Aorta (tissue), 5 donors: ENCODE measurements at regions of chr1 and their contacts with region 1.

Region 1: DNA sequence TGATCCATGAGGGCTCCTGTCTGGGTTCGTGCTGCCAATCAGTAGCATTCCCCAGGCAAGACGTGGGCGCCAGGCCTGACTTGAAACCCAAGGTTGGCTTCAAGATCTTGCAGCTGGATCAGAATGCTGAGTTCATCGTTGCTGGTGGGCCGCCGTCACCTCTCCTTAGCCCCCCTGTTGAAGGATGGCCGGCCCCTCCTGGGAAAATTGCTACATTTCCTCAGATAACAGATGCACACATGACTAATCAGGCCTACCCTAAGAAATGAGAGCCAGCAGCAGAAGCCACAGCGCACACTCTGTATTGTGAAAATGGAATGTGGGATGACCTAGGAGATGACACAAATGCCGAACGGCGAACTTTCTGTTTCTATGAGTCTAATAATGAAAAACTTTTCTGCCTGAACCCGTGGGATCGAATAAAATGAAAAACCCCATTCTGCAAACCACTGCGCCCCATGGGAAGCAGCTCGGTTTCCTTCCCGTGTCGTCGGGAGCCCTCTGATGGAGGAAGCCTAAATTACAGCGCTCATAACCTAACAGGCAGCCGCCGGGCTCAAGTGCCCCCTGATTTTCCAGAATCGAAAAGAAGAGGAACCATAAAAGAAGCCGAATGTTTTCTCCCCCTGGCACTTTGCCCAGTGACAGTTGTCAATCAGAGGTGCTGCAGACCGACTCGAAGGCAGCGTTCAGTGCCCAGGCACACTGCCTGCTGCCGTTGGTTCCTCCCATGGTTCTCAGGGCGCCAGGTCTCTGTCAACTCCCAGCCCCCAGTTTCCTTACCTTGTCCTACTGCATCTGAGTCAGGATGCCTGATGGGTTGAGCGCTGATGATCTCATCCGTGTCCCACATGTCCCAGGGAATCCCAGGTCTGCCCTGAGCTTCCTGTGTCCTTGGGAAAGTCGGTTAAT is 38.2 kb upstream of the H6PD start:
- DNase-seq: peak; percentile 82 to 88
- ATAC-seq: peak; percentile 83
- H3K4me3 ChIP-seq: no peak overlapping the region
- H3K27ac ChIP-seq: no peak overlapping the region
- H3K4me1 ChIP-seq: no peaks in the 10 kb centered on the region
- H3K27me3 ChIP-seq: no peaks in the 10 kb centered on the region

Region 2: DNA sequence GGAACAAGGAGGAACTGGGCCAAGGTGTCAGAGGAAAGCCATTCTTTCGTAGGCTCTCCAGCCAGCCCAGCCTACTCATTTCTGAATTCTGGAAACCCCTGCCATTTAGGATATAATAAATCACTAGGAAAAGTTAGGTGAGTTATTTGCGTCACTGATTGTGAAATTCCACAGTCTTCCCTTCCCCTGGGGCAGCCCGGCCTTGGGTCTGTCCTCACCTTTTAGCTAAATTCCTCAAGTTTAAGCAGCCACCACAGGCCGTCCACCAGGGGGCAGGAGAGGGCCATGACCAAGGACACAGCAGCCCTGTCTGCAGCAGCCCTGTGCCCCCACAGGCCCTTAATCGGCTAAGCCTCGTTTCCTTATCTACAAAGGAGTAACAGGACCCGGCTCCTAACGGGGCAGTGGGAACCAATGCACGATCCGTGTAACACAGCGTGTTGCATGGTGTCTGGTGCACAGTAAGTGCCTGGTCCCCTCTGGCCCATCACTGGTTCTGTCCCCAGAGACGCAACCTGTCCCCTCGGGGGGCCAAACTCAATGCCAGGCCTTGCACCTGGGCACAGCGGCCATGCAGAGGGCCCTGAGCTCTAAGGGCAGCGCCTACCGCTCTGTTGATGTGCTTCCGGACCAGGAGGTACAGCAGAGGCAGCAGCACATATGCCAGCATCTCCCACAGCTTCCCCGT is 85.6 kb before region 1 on chr1:
- intact Hi-C with region 1: loop called (anchors 2 to 5 kb)
- DNase-seq: peak; percentile 93 to 97
- ATAC-seq: peak; percentile 87
- H3K4me3 ChIP-seq: no peak overlapping the region
- H3K27ac ChIP-seq: no peak overlapping the region
- H3K4me1 ChIP-seq: no peaks in the 10 kb centered on the region
- H3K27me3 ChIP-seq: no peaks in the 10 kb centered on the region

Region 3: DNA sequence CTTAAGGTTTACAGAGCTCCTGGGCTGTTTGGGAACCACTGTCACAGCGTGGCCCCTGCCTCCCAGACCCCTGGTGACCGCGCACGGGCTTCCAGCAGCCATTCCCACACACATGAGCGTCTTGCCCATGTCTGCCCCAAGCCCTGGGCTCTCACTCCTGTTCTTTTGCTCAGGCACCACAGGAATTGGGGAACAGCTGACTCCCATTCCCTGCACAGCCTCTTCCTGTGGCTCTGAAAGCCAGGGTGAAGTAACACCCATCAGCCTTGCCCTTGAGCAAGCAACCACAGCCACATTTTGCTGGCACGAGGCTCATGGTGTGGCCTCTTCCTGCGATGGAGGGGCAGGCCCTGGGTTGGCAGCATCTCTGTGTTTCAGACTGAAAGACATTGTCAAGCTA is 53.1 kb before region 1 on chr1:
- intact Hi-C with region 1: loop called (anchors 5 kb)
- DNase-seq: peak; percentile 74 to 80
- ATAC-seq: no peak
- H3K4me3 ChIP-seq: no peak overlapping the region
- H3K27ac ChIP-seq: no peak overlapping the region
- H3K4me1 ChIP-seq: no peaks in the 10 kb centered on the region
- H3K27me3 ChIP-seq: no peaks in the 10 kb centered on the region

Region 4: DNA sequence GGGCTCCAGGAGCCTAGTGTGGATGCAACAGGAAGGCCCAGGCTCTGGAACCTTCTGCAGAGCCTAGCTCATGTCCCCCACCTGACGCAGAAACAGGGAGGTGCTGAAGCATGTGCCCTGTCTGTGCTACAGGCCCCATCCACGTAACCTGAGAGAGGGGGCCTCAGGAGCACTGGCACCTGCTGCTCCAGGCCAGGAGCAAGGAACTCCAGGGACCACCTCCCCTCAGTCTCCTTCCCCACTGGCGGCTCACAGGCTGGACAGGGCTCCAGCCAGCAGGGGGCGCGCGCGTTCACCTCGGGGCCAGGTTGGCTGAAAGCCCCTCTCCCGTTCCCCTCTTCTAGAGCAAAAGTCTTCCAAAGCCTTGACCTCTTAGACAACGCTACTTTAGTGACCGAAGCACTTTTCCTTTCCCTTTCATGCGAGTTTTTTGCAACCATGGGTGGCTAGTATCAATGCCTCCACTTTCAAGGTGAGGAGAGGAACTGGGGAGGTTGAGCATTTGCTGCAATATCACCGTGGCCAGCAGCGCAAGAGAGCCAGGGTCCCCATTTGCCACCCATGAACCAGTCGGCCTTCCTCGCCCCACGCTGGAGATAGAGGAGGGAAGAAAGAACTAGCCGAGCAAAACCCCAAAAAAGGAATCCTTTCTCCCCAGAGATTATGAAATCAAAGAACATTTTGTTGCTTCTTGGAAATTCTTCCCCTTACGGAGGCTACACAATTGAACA is 15.0 kb before region 1 on chr1:
- intact Hi-C with region 1: no loop called
- DNase-seq: peak; percentile 87 to 93
- ATAC-seq: peak; percentile 79
- H3K4me3 ChIP-seq: peak overlapping the region; percentile 70 to 96
- H3K27ac ChIP-seq: no peak overlapping the region
- H3K4me1 ChIP-seq: no peaks in the 10 kb centered on the region
- H3K27me3 ChIP-seq: no peaks in the 10 kb centered on the region

Region 5: GRCh38 chr1:10378081-10378841 is 1181.9 kb after region 1 on chr1:
- intact Hi-C with region 1: no loop called
- DNase-seq: peak; percentile 72 to 76
- ATAC-seq: peak; percentile 76
- H3K4me3 ChIP-seq: no peak overlapping the region
- H3K27ac ChIP-seq: peak overlapping the region in 1 of 2 donors; percentile 37
- H3K4me1 ChIP-seq: no peaks in the 10 kb centered on the region
- H3K27me3 ChIP-seq: no peaks in the 10 kb centered on the region